H1 (cell line): ENCODE measurements at regions of chr22 and their contacts with region 1.

Region 1: GRCh38 chr22:38540701-38541100 is 29.3 kb downstream of the DMC1 start:
- DNase-seq: no peak
- H3K4me3 ChIP-seq: no peak overlapping the region
- H3K27ac ChIP-seq: no peak overlapping the region
- H3K4me1 ChIP-seq: 0 out of 7 replicates have a peak, but pooled peaks cover 0 to under 1% (median 0%) of the 10 kb centered on the region in 4 experiments
- H3K27me3 ChIP-seq: no peaks in the 10 kb centered on the region
- CTCF ChIP-seq: no peak
- EP300 ChIP-seq: no peak
- POLR2A ChIP-seq: no peak
- RAD21 ChIP-seq: no peak

Region 2: DNA sequence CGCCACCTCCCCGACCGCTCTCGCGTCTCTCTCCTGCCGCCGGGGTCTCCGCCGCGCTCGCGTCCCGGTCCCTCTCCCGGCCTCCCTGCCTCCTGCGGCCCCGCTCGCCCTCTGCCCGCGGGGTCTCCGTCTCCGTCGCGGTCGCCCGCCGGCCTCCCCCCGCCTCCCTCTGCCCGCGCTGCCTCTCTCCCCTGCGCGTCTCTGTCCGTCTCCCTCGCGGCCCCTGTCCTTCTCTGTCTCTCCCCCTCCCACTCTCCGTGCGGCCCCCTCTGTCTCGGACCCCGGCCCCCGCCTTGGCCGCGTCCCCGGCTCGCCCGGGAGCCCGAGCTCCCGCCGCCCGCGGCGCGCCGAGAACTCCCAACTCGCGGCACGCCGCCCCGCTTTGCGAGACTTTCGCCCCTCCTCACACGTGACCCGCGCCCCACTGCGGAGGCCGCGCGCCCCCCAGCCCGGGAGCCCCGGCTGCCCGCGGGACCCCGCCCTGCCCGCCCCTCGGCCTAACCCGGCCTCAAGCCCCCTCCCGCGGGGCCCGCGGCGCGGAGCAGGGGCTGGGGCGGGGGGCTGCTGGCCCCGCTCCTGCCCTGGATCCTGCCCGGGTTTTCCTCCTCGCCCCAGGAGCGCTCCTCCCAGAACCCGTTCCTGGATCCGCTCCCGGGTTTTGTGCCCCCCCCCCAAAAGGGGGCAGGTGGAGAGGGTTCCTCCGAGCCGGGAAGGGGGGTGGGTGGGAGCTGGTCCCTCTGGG is 85.0 kb before region 1 on chr22:
- CTCF ChIA-PET with region 1: no interaction called
- POLR2A ChIA-PET with region 1: no interaction called
- DNase-seq: peak in 1 of 2 experiments; percentile 90
- H3K4me3 ChIP-seq: peak overlapping the region; percentile 40 to 89 (median 44)
- H3K27ac ChIP-seq: no peak overlapping the region
- H3K4me1 ChIP-seq: peaks cover 0 to 18% (median 9%) of the 10 kb centered on the region in 4 experiments; a peak in 6 of 7 replicates
- H3K27me3 ChIP-seq: peaks cover 15 to 47% (median 44%) of the 10 kb centered on the region in 4 experiments
- CTCF ChIP-seq: no peak
- EP300 ChIP-seq: peak in 1 of 2 experiments; percentile 75; a peak in 2 of 3 replicates
- POLR2A ChIP-seq: no peak
- RAD21 ChIP-seq: 0 out of 4 replicates have a peak, but pooled peaks of 1 of the 2 experiments have one; percentile 4

Region 3: DNA sequence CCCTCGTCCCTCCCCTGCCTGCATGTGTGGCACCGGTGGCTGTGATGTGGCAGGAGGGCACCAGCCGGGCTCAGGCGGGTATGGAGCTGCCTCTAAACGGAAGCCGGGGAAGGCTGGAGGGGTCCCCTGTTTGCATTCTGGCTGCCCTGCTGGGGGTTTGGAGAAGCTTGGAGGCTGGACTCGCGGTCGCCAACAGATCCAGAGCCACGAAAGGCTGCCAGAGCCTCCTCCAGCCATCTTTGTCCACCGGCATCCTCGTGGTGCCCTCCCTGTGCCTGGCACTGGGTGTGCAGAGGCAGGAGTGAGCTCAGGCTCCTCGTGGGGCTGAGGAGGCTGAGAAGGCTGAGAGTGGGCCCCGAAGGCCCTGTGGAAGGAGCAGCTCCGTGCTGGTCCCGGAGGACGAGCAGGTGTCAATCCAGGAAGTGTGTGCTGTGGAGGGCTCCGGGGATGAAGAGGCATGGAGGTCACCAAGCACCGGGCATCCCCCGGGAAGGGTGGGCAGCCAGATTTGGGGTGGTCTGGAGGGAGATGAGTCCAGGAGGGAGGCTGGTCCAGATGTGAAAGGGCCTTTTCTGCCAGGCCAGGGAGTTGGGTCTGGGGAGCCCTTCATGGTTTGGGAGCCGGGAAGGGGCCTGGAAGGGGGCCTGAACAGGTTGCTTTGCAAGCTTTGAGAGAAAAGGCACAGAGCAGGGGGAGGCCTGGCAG is 71.8 kb before region 1 on chr22:
- CTCF ChIA-PET with region 1: no interaction called
- POLR2A ChIA-PET with region 1: no interaction called
- DNase-seq: no peak
- H3K4me3 ChIP-seq: peak overlapping the region in 1 of 4 experiments; percentile 69; a peak in 2 of 8 replicates
- H3K27ac ChIP-seq: no peak overlapping the region
- H3K4me1 ChIP-seq: peaks cover 0 to 10% (median 6%) of the 10 kb centered on the region in 4 experiments; a peak in 5 of 7 replicates
- H3K27me3 ChIP-seq: peaks cover 0 to 24% (median 12%) of the 10 kb centered on the region in 4 experiments; a peak in 6 of 7 replicates
- CTCF ChIP-seq: no peak
- EP300 ChIP-seq: no peak
- POLR2A ChIP-seq: no peak
- RAD21 ChIP-seq: no peak

Region 4: DNA sequence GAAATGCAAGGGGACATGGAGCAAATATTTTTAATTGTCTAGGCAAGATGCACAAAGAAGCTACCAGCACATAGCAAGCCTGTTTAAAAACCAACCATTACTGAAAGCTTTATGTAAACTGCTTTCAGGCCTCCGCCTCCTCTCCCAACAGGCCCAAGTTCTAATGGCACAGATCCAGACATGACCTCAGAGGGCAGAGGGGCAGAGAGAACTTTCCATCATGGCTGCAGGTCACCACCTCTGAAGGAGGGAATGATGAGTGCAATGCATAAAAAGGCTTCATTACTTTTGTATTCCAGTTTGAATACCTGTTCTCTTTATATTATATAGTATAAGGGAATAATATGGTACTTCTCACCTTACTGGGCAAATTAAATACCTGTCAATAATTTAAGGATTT is 49.8 kb before region 1 on chr22:
- CTCF ChIA-PET with region 1: interaction called, 4 read pairs
- POLR2A ChIA-PET with region 1: interaction called, 10 read pairs
- DNase-seq: no peak
- H3K4me3 ChIP-seq: no peak overlapping the region
- H3K27ac ChIP-seq: no peak overlapping the region
- H3K4me1 ChIP-seq: peaks cover 0 to 4% (median 4%) of the 10 kb centered on the region in 4 experiments; a peak in 3 of 7 replicates
- H3K27me3 ChIP-seq: no peaks in the 10 kb centered on the region
- CTCF ChIP-seq: no peak
- EP300 ChIP-seq: no peak
- POLR2A ChIP-seq: peak; percentile 16 to 27; a peak in 2 of 3 replicates
- RAD21 ChIP-seq: no peak

Region 5: GRCh38 chr22:38645430-38645829 is 104.7 kb after region 1 on chr22:
- CTCF ChIA-PET with region 1: no interaction called
- POLR2A ChIA-PET with region 1: no interaction called
- DNase-seq: no peak
- H3K4me3 ChIP-seq: no peak overlapping the region
- H3K27ac ChIP-seq: no peak overlapping the region
- H3K4me1 ChIP-seq: no peaks in the 10 kb centered on the region
- H3K27me3 ChIP-seq: no peaks in the 10 kb centered on the region
- CTCF ChIP-seq: no peak
- EP300 ChIP-seq: no peak
- POLR2A ChIP-seq: no peak
- RAD21 ChIP-seq: no peak